ENCODE measurements at regions of chr1 and their contacts with region 1.

Region 1: GRCh38 chr1:45011837-45012638 is at the start of gene UROD:
- DNase-seq: peak; percentile 96
- ATAC-seq: peak; percentile 80
- H3K4me3 Mint-ChIP-seq: peak within 1 kb of the TSS; percentile 75
- H3K27ac Mint-ChIP-seq: peak within 1 kb of the TSS; percentile 81
- H3K4me1 Mint-ChIP-seq: peaks cover 42% of the 10 kb centered on the region
- H3K27me3 Mint-ChIP-seq: no peaks in the 10 kb centered on the region
- total RNA-seq, gene UROD: 74.7 to 76.4 TPM

Region 2: GRCh38 chr1:44786138-44786840 is 225.7 kb before region 1 on chr1:
- CTCF ChIA-PET with region 1: interaction called, 23 read pairs
- POLR2A ChIA-PET with region 1: interaction called, 4 read pairs
- DNase-seq: peak; percentile 82
- ATAC-seq: peak; percentile 64
- H3K4me3 Mint-ChIP-seq: peak overlapping the region; percentile 64
- H3K27ac Mint-ChIP-seq: peak overlapping the region; percentile 74
- H3K4me1 Mint-ChIP-seq: peaks cover 42% of the 10 kb centered on the region
- H3K27me3 Mint-ChIP-seq: no peaks in the 10 kb centered on the region

Region 3: GRCh38 chr1:44807262-44808062 is 204.6 kb before region 1 on chr1 and contains the start of gene DYNLT4:
- CTCF ChIA-PET with region 1: interaction called, 8 read pairs
- POLR2A ChIA-PET with region 1: interaction called, 24 read pairs
- DNase-seq: peak; percentile 94
- ATAC-seq: peak; percentile 52
- H3K4me3 Mint-ChIP-seq: peak within 1 kb of the TSS; percentile 65
- H3K27ac Mint-ChIP-seq: peak within 1 kb of the TSS; percentile 100
- H3K4me1 Mint-ChIP-seq: peaks cover 86% of the 10 kb centered on the region
- H3K27me3 Mint-ChIP-seq: no peaks in the 10 kb centered on the region
- total RNA-seq, gene DYNLT4: 1.8 to 2.3 TPM

Region 4: DNA sequence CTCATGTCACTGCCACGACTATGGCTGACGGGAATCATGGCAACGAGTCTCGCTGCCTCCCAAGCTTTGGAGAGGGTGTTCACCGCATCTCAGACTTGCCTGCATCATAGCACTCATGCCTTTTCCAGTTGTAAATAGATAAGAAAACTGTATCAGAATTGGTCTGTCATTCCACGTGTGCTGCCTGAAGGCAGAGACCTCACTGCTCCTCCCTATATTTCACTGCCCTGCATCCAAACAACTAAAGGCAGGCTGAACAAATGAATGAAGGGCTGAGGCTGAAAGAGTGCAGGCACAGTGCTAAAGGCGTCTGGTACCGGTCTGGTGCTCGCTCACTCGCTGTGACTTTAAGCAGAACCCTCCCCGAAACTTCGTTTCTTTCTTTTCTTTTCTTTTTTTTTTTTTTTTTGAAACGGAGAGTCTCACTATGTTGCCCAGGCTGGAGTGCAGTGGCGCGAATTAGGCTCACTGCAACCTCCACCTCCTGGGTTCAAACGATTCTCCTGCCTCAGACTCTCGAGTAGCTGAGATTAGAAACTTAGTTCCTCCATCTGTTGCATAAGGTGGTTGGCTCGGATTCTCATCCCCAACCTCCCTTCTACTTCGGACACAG is 26.2 kb before region 1 on chr1:
- CTCF ChIA-PET with region 1: interaction called, 6 read pairs
- POLR2A ChIA-PET with region 1: interaction called, 19 read pairs
- DNase-seq: no peak
- ATAC-seq: peak; percentile 17
- H3K4me3 Mint-ChIP-seq: peak overlapping the region; percentile 98
- H3K27ac Mint-ChIP-seq: peak overlapping the region; percentile 93
- H3K4me1 Mint-ChIP-seq: peaks cover 17% of the 10 kb centered on the region
- H3K27me3 Mint-ChIP-seq: no peaks in the 10 kb centered on the region

Region 5: DNA sequence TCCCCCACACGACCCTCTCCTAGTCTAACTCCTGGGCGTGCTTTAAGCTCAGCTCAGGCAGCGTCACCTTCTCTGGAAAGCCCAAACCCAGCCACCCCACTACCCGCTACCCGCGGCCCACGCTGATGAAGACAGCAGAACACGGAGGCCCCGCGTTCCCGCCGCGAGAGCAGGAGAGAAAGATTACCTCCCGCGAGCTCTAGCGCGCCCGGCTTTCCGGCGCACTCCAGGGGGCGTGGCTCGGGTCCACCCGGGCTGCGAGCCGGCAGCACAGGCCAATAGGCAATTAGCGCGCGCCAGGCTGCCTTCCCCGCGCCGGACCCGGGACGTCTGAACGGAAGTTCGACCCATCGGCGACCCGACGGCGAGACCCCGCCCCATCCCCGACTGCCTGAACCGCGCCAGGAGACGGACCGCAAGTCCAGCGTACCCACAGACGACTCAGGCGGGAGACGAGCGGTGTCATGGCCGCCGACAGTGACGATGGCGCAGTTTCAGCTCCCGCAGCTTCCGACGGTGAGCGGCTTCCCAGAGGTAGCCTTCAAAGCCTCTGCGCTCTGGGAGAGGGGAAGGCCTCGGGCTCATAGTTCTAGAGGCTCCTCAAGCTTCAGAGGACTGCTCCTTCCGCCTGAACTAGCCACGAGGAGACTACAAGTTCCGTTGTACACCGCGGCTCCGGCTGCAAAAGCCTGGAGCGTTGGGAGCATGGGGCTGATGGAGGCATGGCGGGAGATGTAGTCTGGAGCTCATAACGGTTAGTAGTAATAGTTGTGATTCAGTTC is 327.9 kb after region 1 on chr1 and contains the starts of genes MUTYH and TOE1:
- CTCF ChIA-PET with region 1: interaction called, 40 read pairs
- POLR2A ChIA-PET with region 1: interaction called, 25 read pairs
- DNase-seq: peak; percentile 97
- ATAC-seq: peak; percentile 91
- H3K4me3 Mint-ChIP-seq: peak within 1 kb of the TSS; percentile 100
- H3K27ac Mint-ChIP-seq: peak within 1 kb of the TSS; percentile 100
- H3K4me1 Mint-ChIP-seq: peaks cover 53% of the 10 kb centered on the region
- H3K27me3 Mint-ChIP-seq: no peaks in the 10 kb centered on the region
- total RNA-seq, gene MUTYH: 59.8 to 61.8 TPM
- total RNA-seq, gene TOE1: 25.4 to 25.9 TPM